Activated B cell treated with CpG ODN at 0.5 μM for 24 hours (primary cell): ENCODE measurements at regions of chr1 and their contacts with region 1.

Region 1: DNA sequence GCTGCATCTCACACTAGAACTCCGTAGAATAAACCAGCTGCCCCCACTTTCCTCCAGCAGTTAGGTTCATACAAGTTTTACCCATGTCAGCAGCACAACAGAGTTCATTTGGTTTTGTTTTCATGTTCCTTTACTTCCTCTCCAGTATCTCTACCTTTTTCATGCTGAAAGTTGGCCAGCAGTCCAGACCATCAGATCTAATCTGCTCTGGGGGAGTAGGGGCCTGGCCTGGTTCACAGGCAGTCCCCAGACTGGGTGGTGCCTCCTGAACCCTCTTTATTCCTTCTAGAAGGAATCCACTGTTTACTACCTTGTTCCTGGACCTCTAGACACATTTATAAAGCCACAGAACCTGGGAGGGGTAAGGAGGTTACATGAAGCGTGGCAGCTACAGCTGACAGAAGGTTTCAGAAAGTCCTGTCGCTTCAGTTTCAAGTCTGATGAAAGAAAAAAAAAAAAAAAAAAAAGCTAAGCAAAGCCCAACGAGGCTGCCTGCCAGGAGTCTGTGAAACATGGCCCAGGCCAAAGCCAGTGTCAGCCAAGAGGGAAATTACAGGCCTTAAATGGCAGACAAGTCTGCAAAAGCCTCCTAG is 184.6 kb upstream of the JUN start:
- DNase-seq: peak; percentile 46
- ATAC-seq: peak; percentile 95
- H3K4me3 Mint-ChIP-seq: peak overlapping the region; percentile 77
- H3K27ac Mint-ChIP-seq: peak overlapping the region; percentile 99
- H3K4me1 Mint-ChIP-seq: peaks cover 72% of the 10 kb centered on the region
- H3K27me3 Mint-ChIP-seq: no peaks in the 10 kb centered on the region
- CTCF ChIP-seq: no peak

Region 2: GRCh38 chr1:58773406-58773840 is 195.0 kb before region 1 on chr1:
- CTCF ChIA-PET with region 1: no interaction called
- POLR2A ChIA-PET with region 1: interaction called, 10 read pairs
- intact Hi-C with region 1: no loop called
- DNase-seq: peak; percentile 24
- ATAC-seq: peak; percentile 89
- H3K4me3 Mint-ChIP-seq: no peak overlapping the region
- H3K27ac Mint-ChIP-seq: peak overlapping the region; percentile 73
- H3K4me1 Mint-ChIP-seq: peaks cover 19% of the 10 kb centered on the region
- H3K27me3 Mint-ChIP-seq: peaks cover 6% of the 10 kb centered on the region
- CTCF ChIP-seq: no peak

Region 3: GRCh38 chr1:58922302-58923089 is 46.0 kb before region 1 on chr1:
- CTCF ChIA-PET with region 1: interaction called, 3 read pairs
- POLR2A ChIA-PET with region 1: interaction called, 3 read pairs
- intact Hi-C with region 1: loop called (anchors 5 kb)
- DNase-seq: no peak
- ATAC-seq: peak; percentile 79
- H3K4me3 Mint-ChIP-seq: no peak overlapping the region
- H3K27ac Mint-ChIP-seq: no peak overlapping the region
- H3K4me1 Mint-ChIP-seq: peaks cover 16% of the 10 kb centered on the region
- H3K27me3 Mint-ChIP-seq: no peaks in the 10 kb centered on the region
- CTCF ChIP-seq: no peak

Region 4: GRCh38 chr1:59007820-59008598 is 39.6 kb after region 1 on chr1:
- CTCF ChIA-PET with region 1: no interaction called
- POLR2A ChIA-PET with region 1: interaction called, 20 read pairs
- intact Hi-C with region 1: loop called (anchors 1 kb)
- DNase-seq: no peak
- ATAC-seq: peak; percentile 76
- H3K4me3 Mint-ChIP-seq: peak overlapping the region; percentile 62
- H3K27ac Mint-ChIP-seq: peak overlapping the region; percentile 90
- H3K4me1 Mint-ChIP-seq: peaks cover 82% of the 10 kb centered on the region
- H3K27me3 Mint-ChIP-seq: no peaks in the 10 kb centered on the region
- CTCF ChIP-seq: no peak

Region 5: DNA sequence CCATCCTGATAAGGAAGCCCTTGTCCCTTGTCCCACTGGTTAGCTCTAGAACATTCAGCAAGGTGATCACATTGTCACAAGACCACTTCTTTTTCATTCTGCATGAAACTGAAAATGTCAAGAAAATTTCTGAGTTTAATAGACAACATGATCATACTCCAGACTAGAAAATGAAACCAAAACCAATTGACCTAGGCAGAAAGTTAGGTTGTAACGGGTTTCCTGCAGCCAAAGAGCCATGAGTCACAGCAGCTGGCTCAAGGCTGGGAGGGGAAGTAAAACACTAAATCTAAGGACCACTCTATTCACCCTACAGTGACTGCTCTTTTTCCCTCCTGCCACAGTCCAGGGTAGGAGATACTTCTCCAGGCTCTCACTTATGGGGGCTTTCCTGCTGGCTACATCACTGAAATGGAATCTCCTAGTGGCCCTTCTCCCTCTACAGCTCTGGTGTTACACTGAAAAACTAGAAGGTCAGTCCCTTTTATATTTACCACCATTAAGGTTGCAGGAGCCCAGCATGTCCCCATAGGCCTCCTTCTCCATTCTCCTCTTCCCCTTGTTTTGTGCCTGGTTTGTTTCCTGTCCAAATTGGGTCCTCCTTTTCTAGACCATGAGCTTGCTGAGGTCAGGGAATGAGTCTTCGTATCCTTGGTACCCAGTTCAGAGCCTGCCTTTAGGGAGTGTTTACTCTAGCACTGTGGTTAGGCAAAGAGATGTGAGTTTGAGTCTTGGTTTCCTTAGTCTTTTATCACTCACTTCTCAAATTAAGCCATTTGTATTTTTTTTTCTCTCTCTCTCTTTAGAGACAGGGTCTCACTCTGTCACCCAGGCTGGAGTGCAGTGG is 51.9 kb after region 1 on chr1:
- CTCF ChIA-PET with region 1: no interaction called
- POLR2A ChIA-PET with region 1: interaction called, 7 read pairs
- intact Hi-C with region 1: loop called (anchors 1 kb)
- DNase-seq: no peak
- ATAC-seq: peak; percentile 96
- H3K4me3 Mint-ChIP-seq: peak overlapping the region; percentile 77
- H3K27ac Mint-ChIP-seq: peak overlapping the region; percentile 91
- H3K4me1 Mint-ChIP-seq: peaks cover 52% of the 10 kb centered on the region
- H3K27me3 Mint-ChIP-seq: no peaks in the 10 kb centered on the region
- CTCF ChIP-seq: no peak

Region 6: GRCh38 chr1:59096501-59096900 is 128.0 kb after region 1 on chr1:
- CTCF ChIA-PET with region 1: no interaction called
- POLR2A ChIA-PET with region 1: no interaction called
- intact Hi-C with region 1: no loop called
- DNase-seq: no peak
- ATAC-seq: no peak
- H3K4me3 Mint-ChIP-seq: no peak overlapping the region
- H3K27ac Mint-ChIP-seq: peak overlapping the region; percentile 27
- H3K4me1 Mint-ChIP-seq: peaks cover 19% of the 10 kb centered on the region
- H3K27me3 Mint-ChIP-seq: no peaks in the 10 kb centered on the region
- CTCF ChIP-seq: no peak

Region 7: DNA sequence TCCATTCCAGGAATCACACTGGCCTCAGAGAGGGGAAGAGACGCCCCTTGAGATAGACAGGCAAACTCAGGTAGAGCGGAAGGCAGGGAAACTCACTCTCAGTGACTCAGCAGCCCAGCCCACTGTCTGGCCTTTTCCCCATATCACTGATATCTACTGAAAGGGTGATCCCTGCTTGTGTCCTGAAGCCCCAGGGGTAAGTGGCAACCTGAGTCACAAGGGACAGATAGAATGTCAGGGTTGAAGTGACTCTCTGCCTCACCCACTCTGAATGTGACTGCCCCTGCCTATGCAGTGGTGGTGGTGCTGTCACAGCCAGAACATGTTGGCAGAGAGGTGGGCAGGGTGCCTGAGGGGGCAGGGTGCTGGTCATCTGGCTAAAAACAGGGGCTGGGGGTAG is 170.9 kb after region 1 on chr1:
- CTCF ChIA-PET with region 1: no interaction called
- POLR2A ChIA-PET with region 1: no interaction called
- intact Hi-C with region 1: no loop called
- DNase-seq: no peak
- ATAC-seq: no peak
- H3K4me3 Mint-ChIP-seq: no peak overlapping the region
- H3K27ac Mint-ChIP-seq: no peak overlapping the region
- H3K4me1 Mint-ChIP-seq: peaks cover 47% of the 10 kb centered on the region
- H3K27me3 Mint-ChIP-seq: no peaks in the 10 kb centered on the region
- CTCF ChIP-seq: no peak